H1 (cell line): ENCODE measurements at regions of chr3 and their contacts with region 1.

Region 1: GRCh38 chr3:123015557-123015956 is 12.0 kb downstream of the SEMA5B start:
- DNase-seq: no peak
- H3K4me3 ChIP-seq: no peak overlapping the region
- H3K27ac ChIP-seq: no peak overlapping the region
- H3K4me1 ChIP-seq: peaks cover 0 to 4% (median under 1%) of the 10 kb centered on the region in 4 experiments; a peak in 5 of 7 replicates
- H3K27me3 ChIP-seq: no peaks in the 10 kb centered on the region
- CTCF ChIP-seq: peak; percentile 14 to 43 (median 32)
- EP300 ChIP-seq: no peak
- POLR2A ChIP-seq: no peak
- RAD21 ChIP-seq: peak; percentile 45 to 61

Region 2: DNA sequence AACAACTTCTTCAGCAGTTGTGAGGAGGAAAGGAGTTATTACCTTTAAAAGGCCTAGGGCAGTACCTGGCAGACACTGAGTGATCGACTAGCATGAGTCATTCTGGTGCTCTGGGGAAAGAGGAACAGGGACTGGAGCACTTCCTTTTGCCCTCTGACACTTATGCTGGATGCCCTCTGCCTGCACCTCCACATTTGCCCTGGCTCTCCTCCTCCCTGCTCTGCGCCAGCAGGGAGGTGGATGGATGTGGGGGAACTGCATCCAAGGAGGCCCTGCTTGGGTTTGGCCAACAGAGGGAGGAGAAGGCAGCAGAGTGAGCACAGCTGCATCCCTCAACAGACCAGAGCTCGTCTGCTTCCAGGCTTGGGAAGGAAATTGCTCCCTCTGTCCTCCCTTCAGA is 63.0 kb before region 1 on chr3:
- CTCF ChIA-PET with region 1: interaction called, 19 read pairs
- POLR2A ChIA-PET with region 1: interaction called, 3 read pairs
- DNase-seq: no peak
- H3K4me3 ChIP-seq: no peak overlapping the region
- H3K27ac ChIP-seq: no peak overlapping the region
- H3K4me1 ChIP-seq: peaks cover 0 to 20% (median 7%) of the 10 kb centered on the region in 4 experiments; a peak in 5 of 7 replicates
- H3K27me3 ChIP-seq: no peaks in the 10 kb centered on the region
- CTCF ChIP-seq: peak; percentile 45 to 50 (median 47)
- EP300 ChIP-seq: no peak
- POLR2A ChIP-seq: no peak
- RAD21 ChIP-seq: peak; percentile 49 to 62

Region 3: DNA sequence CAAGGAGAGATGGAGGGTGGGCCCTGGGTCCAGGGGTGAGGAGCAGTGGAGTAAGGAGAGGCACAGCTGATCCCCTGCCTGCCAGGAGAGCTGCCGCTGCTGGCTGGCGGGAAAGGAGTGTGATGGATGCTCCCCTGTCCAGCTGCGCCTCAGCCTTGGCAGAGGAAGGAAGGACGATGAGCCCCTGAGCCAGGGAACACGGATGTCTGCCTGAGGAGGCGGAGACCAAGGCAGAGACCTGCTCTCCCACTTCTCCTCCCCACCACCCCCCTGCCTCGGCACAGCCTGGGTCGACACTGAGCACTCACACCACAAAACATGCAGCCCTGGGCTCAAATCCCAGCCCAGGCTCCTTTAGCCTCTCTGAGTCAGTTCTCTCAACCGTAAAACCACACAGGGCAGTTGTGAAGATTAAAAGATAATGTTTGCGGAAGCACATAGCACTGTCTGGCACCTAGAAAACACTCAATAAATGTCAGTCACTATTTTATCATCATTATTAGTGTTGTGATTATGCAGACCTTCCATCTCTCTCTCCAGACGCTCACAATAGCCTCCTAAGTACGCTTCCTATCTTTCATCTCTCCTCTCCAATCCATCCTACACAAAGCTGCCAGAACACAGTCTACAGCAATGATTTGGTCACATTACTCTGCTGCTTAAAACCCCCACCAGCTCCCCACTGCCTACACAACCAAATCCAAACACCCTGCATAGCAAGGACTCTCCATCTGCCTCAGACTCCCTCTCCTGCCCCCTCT is 40.2 kb before region 1 on chr3:
- CTCF ChIA-PET with region 1: interaction called, 13 read pairs
- POLR2A ChIA-PET with region 1: no interaction called
- DNase-seq: no peak
- H3K4me3 ChIP-seq: peak overlapping the region in 1 of 4 experiments; percentile 12; a peak in 1 of 8 replicates
- H3K27ac ChIP-seq: no peak overlapping the region
- H3K4me1 ChIP-seq: peaks cover 7 to 46% (median 31%) of the 10 kb centered on the region in 4 experiments
- H3K27me3 ChIP-seq: no peaks in the 10 kb centered on the region
- CTCF ChIP-seq: no peak
- EP300 ChIP-seq: no peak
- POLR2A ChIP-seq: no peak
- RAD21 ChIP-seq: no peak

Region 4: GRCh38 chr3:122993124-122993978 is 22.2 kb before region 1 on chr3:
- CTCF ChIA-PET with region 1: interaction called, 16 read pairs
- POLR2A ChIA-PET with region 1: interaction called, 3 read pairs
- DNase-seq: no peak
- H3K4me3 ChIP-seq: no peak overlapping the region
- H3K27ac ChIP-seq: no peak overlapping the region
- H3K4me1 ChIP-seq: peaks cover 7 to 22% (median 12%) of the 10 kb centered on the region in 4 experiments
- H3K27me3 ChIP-seq: no peaks in the 10 kb centered on the region; a peak in 1 of 7 replicates
- CTCF ChIP-seq: no peak
- EP300 ChIP-seq: no peak
- POLR2A ChIP-seq: no peak
- RAD21 ChIP-seq: peak; percentile 25 to 36; a peak in 3 of 4 replicates

Region 5: DNA sequence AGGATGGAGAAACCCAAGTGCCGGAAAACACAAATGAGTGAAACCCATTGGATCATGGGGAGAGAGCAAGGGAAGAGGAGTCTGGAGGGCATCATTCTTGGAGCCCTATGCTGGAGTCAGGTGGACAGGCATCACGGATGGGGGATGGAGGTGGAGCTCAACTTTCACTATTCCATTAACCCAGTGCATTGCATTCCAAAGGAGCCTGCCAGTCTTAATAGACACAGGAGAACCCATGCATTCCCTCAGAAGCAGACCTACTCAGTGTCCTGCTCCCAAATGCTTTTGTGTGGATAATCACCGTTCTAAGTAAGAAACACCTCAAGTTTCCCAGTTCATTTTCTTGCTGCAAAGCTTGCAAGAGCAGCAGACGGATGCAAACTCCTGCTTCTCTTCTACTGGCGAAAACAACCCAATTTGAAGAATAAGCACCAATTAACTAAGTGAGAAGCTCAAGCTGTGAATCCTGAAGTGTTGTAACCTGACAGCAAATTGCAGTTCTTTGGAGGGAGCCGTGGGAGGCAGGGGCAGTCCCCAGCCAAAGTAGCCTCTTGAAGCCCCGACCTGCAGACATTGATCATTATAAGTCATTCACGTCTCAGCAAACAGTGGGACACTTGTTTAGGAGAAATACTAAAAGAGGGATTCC is 13.3 kb before region 1 on chr3:
- CTCF ChIA-PET with region 1: interaction called, 13 read pairs
- POLR2A ChIA-PET with region 1: interaction called, 3 read pairs
- DNase-seq: no peak
- H3K4me3 ChIP-seq: no peak overlapping the region
- H3K27ac ChIP-seq: no peak overlapping the region
- H3K4me1 ChIP-seq: peaks cover 10 to 24% (median 10%) of the 10 kb centered on the region in 4 experiments; a peak in 5 of 7 replicates
- H3K27me3 ChIP-seq: peaks cover 0 to 2% (median 0%) of the 10 kb centered on the region in 4 experiments; a peak in 2 of 7 replicates
- CTCF ChIP-seq: no peak
- EP300 ChIP-seq: no peak
- POLR2A ChIP-seq: no peak
- RAD21 ChIP-seq: no peak

Region 6: GRCh38 chr3:123053106-123053505 is 37.5 kb after region 1 on chr3:
- CTCF ChIA-PET with region 1: no interaction called
- POLR2A ChIA-PET with region 1: no interaction called
- DNase-seq: no peak
- H3K4me3 ChIP-seq: no peak overlapping the region
- H3K27ac ChIP-seq: no peak overlapping the region
- H3K4me1 ChIP-seq: no peaks in the 10 kb centered on the region; a peak in 3 of 7 replicates
- H3K27me3 ChIP-seq: no peaks in the 10 kb centered on the region
- CTCF ChIP-seq: no peak
- EP300 ChIP-seq: no peak
- POLR2A ChIP-seq: no peak
- RAD21 ChIP-seq: no peak